ENCODE measurements at regions of chr15 and their contacts with region 1.

Region 1: DNA sequence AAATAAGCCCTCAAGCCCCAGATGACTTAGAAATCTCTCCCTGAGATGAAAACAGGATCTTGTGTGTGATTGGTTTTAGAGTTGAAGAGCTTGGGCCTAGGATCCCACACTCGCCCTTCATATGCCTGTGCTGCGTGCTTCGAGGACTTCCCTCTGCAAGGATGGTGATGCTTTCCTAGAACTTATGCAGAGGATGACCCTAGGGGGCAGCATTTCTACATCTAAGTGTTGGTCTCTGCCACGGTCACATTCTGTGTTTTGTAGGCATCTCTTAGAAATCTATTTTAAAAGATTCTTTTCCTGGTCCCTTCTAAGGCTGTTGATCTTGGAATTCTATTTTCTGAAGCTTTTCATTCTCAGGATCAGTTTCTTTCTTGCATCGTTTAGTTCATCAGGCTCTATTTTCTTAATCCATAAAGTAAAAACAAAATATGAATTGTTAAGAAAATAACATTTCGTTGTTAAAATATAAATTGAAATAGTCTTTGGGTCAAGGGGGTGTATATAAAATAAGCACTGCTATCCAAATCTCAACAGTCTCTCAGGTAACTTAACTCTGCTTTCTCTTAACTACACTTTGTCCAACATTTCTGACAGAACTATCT is 45.7 kb downstream of the WDR76 start:
- DNase-seq: peak; percentile 28
- H3K4me3 ChIP-seq: no peak overlapping the region
- CTCF ChIP-seq: peak; percentile 77

Region 2: GRCh38 chr15:43859546-43859945 is 13.0 kb before region 1 on chr15:
- CTCF ChIA-PET with region 1: interaction called, 19 read pairs
- POLR2A ChIA-PET with region 1: no interaction called
- DNase-seq: no peak
- H3K4me3 ChIP-seq: no peak overlapping the region
- CTCF ChIP-seq: no peak

Region 3: DNA sequence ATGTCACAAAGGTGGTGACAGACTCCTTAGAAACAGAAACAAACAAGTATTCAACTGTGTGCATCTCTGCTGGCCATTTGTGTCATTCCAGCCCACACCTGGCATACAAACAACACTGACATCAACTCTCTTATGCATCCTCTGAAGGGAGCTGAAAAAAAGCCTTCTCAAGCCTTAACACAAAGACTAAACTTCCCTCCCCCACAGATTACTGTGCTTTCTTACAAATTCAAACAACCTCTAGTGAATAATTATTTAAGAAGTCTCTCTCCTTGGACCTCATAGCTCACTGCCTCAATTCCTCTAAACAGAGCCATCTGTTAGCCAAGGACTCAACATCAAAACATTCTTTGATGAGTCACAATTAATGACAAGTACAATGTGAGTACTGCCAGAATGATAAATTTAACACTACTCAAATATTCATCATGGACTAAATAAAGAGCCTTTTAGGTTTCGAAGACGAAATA is 86.4 kb after region 1 on chr15:
- CTCF ChIA-PET with region 1: no interaction called
- POLR2A ChIA-PET with region 1: no interaction called
- DNase-seq: peak; percentile 12
- H3K4me3 ChIP-seq: no peak overlapping the region
- CTCF ChIP-seq: no peak

Region 4: DNA sequence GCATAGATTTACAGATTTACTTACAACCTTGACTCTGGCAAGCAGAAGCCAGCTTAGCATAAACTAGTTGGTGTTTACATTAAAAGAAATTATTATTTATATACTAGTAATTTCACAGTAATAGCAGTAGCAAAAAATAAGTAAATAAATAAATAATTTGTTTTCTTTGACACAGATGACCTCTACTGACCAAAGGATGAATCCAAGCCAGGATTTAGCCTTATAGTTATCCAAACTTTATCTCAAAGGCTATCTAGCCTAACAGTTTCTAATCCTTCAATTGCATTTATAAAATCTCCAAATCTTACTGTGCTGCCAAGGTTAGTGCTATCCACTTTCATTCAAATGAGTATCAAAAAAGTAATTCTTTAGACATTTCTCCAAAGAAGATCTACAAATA is 258.3 kb after region 1 on chr15:
- CTCF ChIA-PET with region 1: interaction called, 16 read pairs
- POLR2A ChIA-PET with region 1: no interaction called
- DNase-seq: no peak
- H3K4me3 ChIP-seq: no peak overlapping the region
- CTCF ChIP-seq: no peak

Region 5: DNA sequence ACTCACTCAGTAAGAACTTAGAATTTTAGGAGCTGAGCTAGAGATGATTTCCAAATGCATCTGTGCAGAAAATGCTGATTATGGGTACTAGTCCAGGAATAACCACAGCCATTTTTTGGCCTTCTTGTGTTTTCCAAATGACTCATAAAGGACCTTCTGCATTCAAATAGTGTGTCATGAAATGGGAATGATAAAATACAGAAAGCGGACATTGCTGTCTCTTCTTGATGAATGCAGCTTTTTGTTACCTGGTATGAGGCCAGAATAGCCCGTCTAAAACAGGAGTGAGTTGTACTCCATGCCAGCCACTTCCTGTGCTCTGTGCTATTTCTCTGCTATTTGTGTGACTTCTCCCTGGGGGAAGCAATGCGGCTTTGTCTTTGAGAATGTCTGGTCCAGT is 343.1 kb after region 1 on chr15:
- CTCF ChIA-PET with region 1: interaction called, 29 read pairs
- POLR2A ChIA-PET with region 1: no interaction called
- DNase-seq: peak; percentile 75
- H3K4me3 ChIP-seq: no peak overlapping the region
- CTCF ChIP-seq: no peak

Region 6: GRCh38 chr15:44222478-44222877 is 350.0 kb after region 1 on chr15:
- CTCF ChIA-PET with region 1: interaction called, 29 read pairs
- POLR2A ChIA-PET with region 1: no interaction called
- DNase-seq: no peak
- H3K4me3 ChIP-seq: no peak overlapping the region
- CTCF ChIP-seq: no peak

Measured in AG04449 (cell line).